ENCODE measurements at regions of chr13 and their contacts with region 1.

Region 1: GRCh38 chr13:25114220-25114619 is 18.3 kb downstream of the PABPC3 start:
- DNase-seq: peak; percentile 13
- H3K4me3 ChIP-seq: no peak overlapping the region
- H3K27me3 ChIP-seq: peaks cover 2% of the 10 kb centered on the region
- CTCF ChIP-seq: peak; percentile 95

Region 2: GRCh38 chr13:25046985-25047511 is 67.2 kb before region 1 on chr13:
- CTCF ChIA-PET with region 1: no interaction called
- POLR2A ChIA-PET with region 1: no interaction called
- DNase-seq: no peak
- H3K4me3 ChIP-seq: peak overlapping the region; percentile 22
- H3K27me3 ChIP-seq: peaks cover 10% of the 10 kb centered on the region
- CTCF ChIP-seq: no peak

Region 3: GRCh38 chr13:25088562-25089221 is 25.5 kb before region 1 on chr13:
- CTCF ChIA-PET with region 1: interaction called, 10 read pairs
- POLR2A ChIA-PET with region 1: no interaction called
- DNase-seq: no peak
- H3K4me3 ChIP-seq: no peak overlapping the region
- H3K27me3 ChIP-seq: no peaks in the 10 kb centered on the region
- CTCF ChIP-seq: no peak

Region 4: GRCh38 chr13:25095862-25096453 is 18.3 kb before region 1 on chr13 and contains the start of gene PABPC3:
- CTCF ChIA-PET with region 1: interaction called, 10 read pairs
- POLR2A ChIA-PET with region 1: no interaction called
- DNase-seq: no peak
- H3K4me3 ChIP-seq: peak within 1 kb of the TSS; percentile 31
- H3K27me3 ChIP-seq: no peaks in the 10 kb centered on the region; the same call in 1 of the 2 replicates
- CTCF ChIP-seq: no peak
- polyA plus RNA-seq, gene PABPC3: 0.16 TPM in 1 of 2 replicates, not detected in the other

Region 5: GRCh38 chr13:25132751-25133390 is 18.7 kb after region 1 on chr13:
- CTCF ChIA-PET with region 1: interaction called, 13 read pairs
- POLR2A ChIA-PET with region 1: interaction called, 3 read pairs
- DNase-seq: no peak
- H3K4me3 ChIP-seq: no peak overlapping the region
- H3K27me3 ChIP-seq: no peaks in the 10 kb centered on the region; the same call in 1 of the 2 replicates
- CTCF ChIP-seq: no peak

Region 6: GRCh38 chr13:25262261-25262660 is 148.0 kb after region 1 on chr13:
- CTCF ChIA-PET with region 1: no interaction called
- POLR2A ChIA-PET with region 1: no interaction called
- DNase-seq: no peak
- H3K4me3 ChIP-seq: no peak overlapping the region
- H3K27me3 ChIP-seq: no peaks in the 10 kb centered on the region
- CTCF ChIP-seq: no peak

Measured in BJ (cell line).